ENCODE measurements at regions of chr5 and their contacts with region 1.

Region 1: DNA sequence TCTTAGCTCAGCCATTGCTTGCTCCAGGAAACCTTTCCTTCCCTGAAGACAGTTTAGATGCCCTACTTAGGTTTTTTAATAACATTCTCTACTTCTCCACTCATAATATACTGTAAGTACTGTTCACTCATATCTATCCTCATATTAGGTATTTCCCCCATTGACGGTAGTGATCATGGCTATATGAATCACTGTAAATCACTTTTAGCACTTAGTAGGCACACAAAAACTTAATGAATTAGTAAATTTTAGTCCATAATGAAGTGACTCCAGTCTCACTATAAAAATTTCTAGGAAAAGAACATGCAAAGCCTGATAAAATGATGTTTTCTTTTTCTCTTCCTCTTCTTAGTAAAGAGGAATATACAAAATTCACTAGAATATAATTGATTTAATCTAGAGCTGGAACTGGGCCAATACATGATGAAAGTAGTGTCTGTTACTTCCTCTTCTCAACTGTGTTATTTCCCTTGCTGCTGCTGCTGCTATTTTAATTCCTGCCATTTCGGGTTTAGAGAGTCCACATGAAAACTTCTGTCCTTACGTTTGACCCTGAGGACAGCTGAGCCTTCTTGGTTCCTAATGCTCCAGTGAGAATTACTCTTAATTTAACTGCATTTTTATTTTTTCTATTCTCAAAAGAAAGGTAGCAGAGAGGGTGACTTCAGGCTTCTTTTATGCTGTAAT is 73.5 kb downstream of the LNPEP start:
- DNase-seq: no peak
- ATAC-seq: no peak
- H3K4me3 ChIP-seq: no peak overlapping the region
- H3K27ac ChIP-seq: no peak overlapping the region
- H3K4me1 ChIP-seq: peaks cover 2% of the 10 kb centered on the region
- H3K27me3 ChIP-seq: no peaks in the 10 kb centered on the region

Region 2: GRCh38 chr5:96876292-96876850 is 133.0 kb before region 1 on chr5 and contains the start of gene ERAP2:
- intact Hi-C with region 1: loop called in 1 of 4 experiments (anchors 10 kb)
- DNase-seq: no peak
- ATAC-seq: peak; percentile 68 to 72
- H3K4me3 ChIP-seq: peak within 1 kb of the TSS; percentile 100
- H3K27ac ChIP-seq: peak within 1 kb of the TSS; percentile 79
- H3K4me1 ChIP-seq: peaks cover 1% of the 10 kb centered on the region
- H3K27me3 ChIP-seq: no peaks in the 10 kb centered on the region
- total RNA-seq, gene ERAP2: 6.3 to 7.2 (median 7.0) TPM

Region 3: DNA sequence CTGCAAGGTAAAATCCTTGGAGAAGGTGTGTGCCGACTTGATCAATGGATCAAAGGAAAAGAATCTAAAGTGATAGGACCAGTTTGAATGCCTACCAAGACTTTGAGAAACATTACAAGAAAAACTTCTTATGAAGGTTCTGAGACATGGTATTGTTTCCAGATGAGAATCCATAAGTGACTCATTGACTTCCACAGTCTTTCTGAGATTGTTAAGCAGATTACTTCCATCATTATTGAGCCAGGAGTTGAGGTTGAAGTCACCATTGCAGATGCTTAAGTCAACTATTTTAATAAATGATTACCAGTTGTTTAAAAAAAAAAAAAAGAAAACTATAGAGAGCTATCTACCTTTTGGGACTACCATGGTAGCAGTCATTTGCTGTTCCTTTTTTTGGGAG is 66.4 kb before region 1 on chr5:
- intact Hi-C with region 1: no loop called
- DNase-seq: no peak
- ATAC-seq: no peak
- H3K4me3 ChIP-seq: no peak overlapping the region
- H3K27ac ChIP-seq: no peak overlapping the region
- H3K4me1 ChIP-seq: peaks cover 4% of the 10 kb centered on the region
- H3K27me3 ChIP-seq: no peaks in the 10 kb centered on the region

Region 4: DNA sequence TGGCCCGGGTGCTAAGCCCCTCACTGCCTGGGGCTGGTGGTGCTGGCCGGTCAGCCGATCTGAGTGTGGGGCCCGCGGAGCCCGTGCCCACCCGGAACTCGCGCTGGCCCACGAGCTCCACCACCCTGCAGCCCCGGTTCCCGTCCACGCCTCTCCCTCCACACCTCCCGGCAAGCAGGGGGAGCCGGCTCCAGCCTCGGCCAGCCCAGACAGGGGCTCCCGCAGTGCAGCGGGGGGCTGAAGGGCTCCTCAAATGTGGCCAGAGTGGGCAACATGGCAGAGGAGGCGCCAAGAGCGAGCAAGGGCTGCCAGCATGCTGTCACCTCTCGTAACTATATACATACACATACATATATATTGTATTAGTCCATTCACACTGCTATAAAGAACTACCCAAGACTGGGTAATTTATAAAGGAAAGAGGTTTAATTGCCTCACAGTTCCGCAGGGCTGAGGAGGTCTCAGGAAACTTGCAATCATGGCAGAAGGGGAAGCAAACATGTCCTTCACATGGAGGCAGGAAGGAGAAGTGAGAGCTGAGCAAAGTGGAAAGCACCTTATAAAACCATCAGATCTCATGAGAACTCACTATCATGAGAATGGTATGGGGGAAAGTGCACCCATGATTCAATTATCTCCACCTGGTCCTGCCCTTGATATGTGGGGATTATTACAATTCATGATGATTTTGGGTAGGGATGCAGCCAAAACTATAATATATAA is 76.3 kb after region 1 on chr5:
- intact Hi-C with region 1: no loop called
- DNase-seq: peak in 2 of 3 donors; percentile 39 to 41
- ATAC-seq: no peak
- H3K4me3 ChIP-seq: no peak overlapping the region
- H3K27ac ChIP-seq: no peak overlapping the region
- H3K4me1 ChIP-seq: no peaks in the 10 kb centered on the region
- H3K27me3 ChIP-seq: no peaks in the 10 kb centered on the region